A673 (cell line): ENCODE measurements at regions of chr3 and their contacts with region 1.

Region 1: GRCh38 chr3:114827495-114827894 is 319.6 kb downstream of the ZBTB20 start:
- DNase-seq: peak; percentile 61
- H3K4me3 ChIP-seq: no peak overlapping the region
- H3K27ac ChIP-seq: no peak overlapping the region
- H3K4me1 ChIP-seq: no peaks in the 10 kb centered on the region
- H3K27me3 ChIP-seq: no peaks in the 10 kb centered on the region
- CTCF ChIP-seq: peak; percentile 64

Region 2: GRCh38 chr3:115085197-115085865 is 257.8 kb after region 1 on chr3:
- CTCF ChIA-PET with region 1: no interaction called
- POLR2A ChIA-PET with region 1: no interaction called
- intact Hi-C with region 1: loop called (anchors 5 kb)
- DNase-seq: peak; percentile 28
- H3K4me3 ChIP-seq: no peak overlapping the region
- H3K27ac ChIP-seq: no peak overlapping the region
- H3K4me1 ChIP-seq: no peaks in the 10 kb centered on the region
- H3K27me3 ChIP-seq: no peaks in the 10 kb centered on the region
- CTCF ChIP-seq: peak; percentile 42

Region 3: GRCh38 chr3:115204475-115204874 is 377.0 kb after region 1 on chr3:
- CTCF ChIA-PET with region 1: no interaction called
- POLR2A ChIA-PET with region 1: no interaction called
- intact Hi-C with region 1: no loop called
- DNase-seq: no peak
- H3K4me3 ChIP-seq: no peak overlapping the region
- H3K27ac ChIP-seq: no peak overlapping the region
- H3K4me1 ChIP-seq: no peaks in the 10 kb centered on the region
- H3K27me3 ChIP-seq: no peaks in the 10 kb centered on the region
- CTCF ChIP-seq: no peak